ENCODE measurements at regions of chr3 and their contacts with region 1.

Region 1: GRCh38 chr3:177041021-177041729 is 156.1 kb downstream of the TBL1XR1 start:
- DNase-seq: peak in 3 of 4 donors; percentile 15 to 25 (median 22)
- ATAC-seq: peak; percentile 27
- H3K4me3 ChIP-seq: no peak overlapping the region
- H3K27ac ChIP-seq: no peak overlapping the region
- H3K4me1 ChIP-seq: no peaks in the 10 kb centered on the region
- H3K27me3 ChIP-seq: no peaks in the 10 kb centered on the region
- CTCF ChIP-seq: no peak
- POLR2A ChIP-seq: no peak

Region 2: GRCh38 chr3:177201706-177202397 is 160.7 kb after region 1 on chr3:
- intact Hi-C with region 1: no loop called
- DNase-seq: peak in 1 of 4 donors; percentile 17
- ATAC-seq: no peak
- H3K4me3 ChIP-seq: no peak overlapping the region
- H3K27ac ChIP-seq: no peak overlapping the region
- H3K4me1 ChIP-seq: peaks cover 16% of the 10 kb centered on the region
- H3K27me3 ChIP-seq: no peaks in the 10 kb centered on the region
- CTCF ChIP-seq: no peak
- POLR2A ChIP-seq: no peak

Region 3: GRCh38 chr3:177359593-177360357 is 318.6 kb after region 1 on chr3:
- intact Hi-C with region 1: loop called (anchors 10 kb)
- DNase-seq: peak; percentile 96 to 98 (median 97)
- ATAC-seq: peak; percentile 98
- H3K4me3 ChIP-seq: no peak overlapping the region
- H3K27ac ChIP-seq: peak overlapping the region; percentile 82 to 94 (median 92)
- H3K4me1 ChIP-seq: peaks cover 43% of the 10 kb centered on the region
- H3K27me3 ChIP-seq: no peaks in the 10 kb centered on the region
- CTCF ChIP-seq: peak in 1 of 7 experiments; percentile 9
- POLR2A ChIP-seq: peak; percentile 51 to 77 (median 70)

Region 4: DNA sequence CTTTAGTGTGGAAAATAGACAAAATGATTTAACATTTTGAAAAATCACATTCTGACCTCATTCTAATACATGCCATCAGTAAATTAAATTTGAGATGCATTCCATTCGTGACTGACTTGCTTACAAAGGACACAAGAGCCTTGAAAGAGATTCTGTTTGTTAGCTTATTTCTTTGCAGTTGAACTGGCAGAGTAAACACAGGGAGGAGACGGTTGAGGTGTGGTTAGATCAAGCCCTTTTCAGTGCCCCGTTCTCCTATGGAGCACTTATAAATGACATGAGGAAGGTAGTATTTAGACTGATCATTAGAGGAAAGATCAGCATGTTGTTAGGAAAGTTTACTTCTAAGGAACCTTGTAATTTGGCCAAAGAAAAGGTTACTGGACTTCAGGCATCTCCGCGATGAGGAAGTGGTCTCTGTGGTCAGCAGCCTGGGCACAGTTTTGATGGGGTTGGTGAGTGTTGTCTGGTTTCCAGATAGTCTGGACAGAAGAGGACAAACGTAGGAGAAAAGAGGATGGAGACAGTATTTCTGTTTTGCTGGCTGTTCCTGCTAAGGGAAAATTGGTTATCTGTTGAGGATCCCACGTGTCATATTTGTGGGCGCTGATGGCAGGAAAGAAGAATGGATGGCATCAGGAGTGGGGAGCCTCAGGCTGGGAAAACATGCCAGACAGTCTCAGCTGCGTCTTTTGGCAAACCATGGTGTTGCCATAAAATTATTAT is 485.0 kb after region 1 on chr3:
- intact Hi-C with region 1: no loop called
- DNase-seq: peak in 1 of 4 donors; percentile 37
- ATAC-seq: no peak
- H3K4me3 ChIP-seq: no peak overlapping the region
- H3K27ac ChIP-seq: no peak overlapping the region
- H3K4me1 ChIP-seq: peaks cover 33% of the 10 kb centered on the region
- H3K27me3 ChIP-seq: no peaks in the 10 kb centered on the region
- CTCF ChIP-seq: no peak
- POLR2A ChIP-seq: no peak